B cell (primary cell): ENCODE measurements at regions of chr7 and their contacts with region 1.

Region 1: GRCh38 chr7:26061688-26062150 is 90.3 kb upstream of the NFE2L3 start:
- DNase-seq: peak; percentile 77
- ATAC-seq: peak; percentile 83
- H3K4me3 ChIP-seq: no peak overlapping the region
- H3K4me3 Mint-ChIP-seq: no peak overlapping the region
- H3K27ac ChIP-seq: no peak overlapping the region
- H3K27ac Mint-ChIP-seq: no peak overlapping the region
- H3K4me1 ChIP-seq: no peaks in the 10 kb centered on the region
- H3K4me1 Mint-ChIP-seq: peaks cover 5% of the 10 kb centered on the region
- H3K27me3 ChIP-seq: peaks cover 0 to 38% (median 14%) of the 10 kb centered on the region in 4 experiments
- H3K27me3 Mint-ChIP-seq: peaks cover 60% of the 10 kb centered on the region
- CTCF ChIP-seq: peak; percentile 92

Region 2: GRCh38 chr7:25951031-25951948 is 110.4 kb before region 1 on chr7:
- CTCF ChIA-PET with region 1: interaction called, 3 read pairs
- POLR2A ChIA-PET with region 1: no interaction called
- intact Hi-C with region 1: loop called (anchors 5 kb)
- DNase-seq: peak; percentile 90
- ATAC-seq: peak; percentile 90
- H3K4me3 ChIP-seq: peak overlapping the region; percentile 15 to 69 (median 51)
- H3K4me3 Mint-ChIP-seq: peak overlapping the region; percentile 89
- H3K27ac ChIP-seq: no peak overlapping the region
- H3K27ac Mint-ChIP-seq: peak overlapping the region; percentile 78
- H3K4me1 ChIP-seq: peaks cover 32 to 33% of the 10 kb centered on the region in 2 donors
- H3K4me1 Mint-ChIP-seq: peaks cover 35% of the 10 kb centered on the region
- H3K27me3 ChIP-seq: peaks cover 0 to 38% (median 33%) of the 10 kb centered on the region in 4 experiments
- H3K27me3 Mint-ChIP-seq: peaks cover 30% of the 10 kb centered on the region
- CTCF ChIP-seq: no peak

Region 3: GRCh38 chr7:26103596-26103995 is 41.9 kb after region 1 on chr7:
- CTCF ChIA-PET with region 1: no interaction called
- POLR2A ChIA-PET with region 1: no interaction called
- intact Hi-C with region 1: no loop called
- DNase-seq: no peak
- ATAC-seq: no peak
- H3K4me3 ChIP-seq: no peak overlapping the region
- H3K4me3 Mint-ChIP-seq: peak overlapping the region; percentile 33
- H3K27ac ChIP-seq: no peak overlapping the region
- H3K27ac Mint-ChIP-seq: no peak overlapping the region
- H3K4me1 ChIP-seq: peaks cover 16 to 30% of the 10 kb centered on the region in 2 donors
- H3K4me1 Mint-ChIP-seq: peaks cover 29% of the 10 kb centered on the region
- H3K27me3 ChIP-seq: no peaks in the 10 kb centered on the region
- H3K27me3 Mint-ChIP-seq: no peaks in the 10 kb centered on the region
- CTCF ChIP-seq: no peak